Posterior vena cava (tissue), 2 donors: ENCODE measurements at regions of chr5 and their contacts with region 1.

Region 1: DNA sequence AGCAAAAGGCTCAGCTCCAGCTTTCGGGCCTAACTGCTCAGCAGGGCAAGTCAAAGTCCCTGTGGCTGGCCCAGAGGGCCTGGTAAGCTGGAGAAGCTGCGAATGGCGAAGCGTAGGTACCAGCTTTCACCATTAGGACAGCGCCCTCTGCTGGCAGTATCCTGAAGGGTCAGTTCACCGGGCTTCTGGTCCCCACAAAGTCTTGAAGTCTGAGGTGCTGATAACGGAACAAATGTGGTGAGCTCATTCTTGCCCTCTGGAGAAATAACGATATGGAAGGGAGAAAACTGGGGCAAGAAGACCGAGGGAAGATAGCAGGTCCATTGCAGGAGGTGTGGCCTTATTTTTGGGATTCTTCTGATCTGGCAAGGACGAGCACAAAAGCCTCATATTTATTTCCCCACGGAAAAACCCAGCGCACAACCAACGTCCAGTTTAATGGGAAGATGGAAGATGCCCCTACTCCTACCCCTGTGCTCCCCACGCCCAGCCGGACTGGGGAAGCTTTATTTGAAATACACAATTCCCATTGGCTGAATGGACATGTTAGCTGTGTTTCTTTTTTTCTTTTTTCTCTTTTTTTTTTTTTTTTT is 7.2 kb downstream of the SOWAHA start:
- DNase-seq: peak; percentile 97

Region 2: GRCh38 chr5:131242728-131243255 is 1577.5 kb before region 1 on chr5:
- intact Hi-C with region 1: no loop called
- DNase-seq: no peak

Region 3: GRCh38 chr5:132086277-132086794 is 733.9 kb before region 1 on chr5:
- intact Hi-C with region 1: no loop called
- DNase-seq: peak; percentile 89

Region 4: DNA sequence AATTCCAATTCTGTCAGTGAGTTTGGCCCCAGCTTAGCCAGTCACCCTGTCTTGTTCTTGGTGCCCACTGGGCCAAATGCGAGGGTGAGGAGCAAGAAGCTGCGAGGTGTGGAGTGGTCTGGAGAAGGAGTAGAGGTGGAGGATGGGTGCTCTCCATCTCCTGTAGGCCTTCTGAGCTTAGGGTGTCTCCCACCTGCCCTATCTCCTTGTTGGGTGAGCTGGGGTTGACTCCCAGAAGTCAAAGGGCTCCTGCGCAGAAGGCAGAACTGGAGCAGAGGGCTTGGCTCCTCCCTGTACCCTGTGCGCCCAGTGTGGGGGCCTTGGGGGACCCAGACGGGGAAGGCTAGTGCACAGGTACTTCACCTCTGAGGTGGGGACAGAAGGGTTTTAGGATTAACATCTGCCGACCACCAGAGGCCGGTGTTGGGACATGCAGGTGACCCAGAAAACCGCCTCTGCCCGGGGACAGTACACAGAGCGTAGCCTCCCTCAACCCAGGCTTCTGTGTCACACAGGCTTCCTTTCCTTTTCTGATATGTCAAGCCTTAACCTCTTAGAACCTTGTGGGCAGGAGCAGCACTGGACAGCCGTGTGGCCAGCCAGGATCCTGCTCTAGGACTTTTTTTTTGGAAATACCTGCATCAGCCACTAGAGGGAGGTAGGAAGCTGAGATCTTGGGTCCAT is 293.8 kb before region 1 on chr5:
- intact Hi-C with region 1: loop called in 1 of 2 experiments (anchors 10 kb)
- DNase-seq: no peak

Region 5: DNA sequence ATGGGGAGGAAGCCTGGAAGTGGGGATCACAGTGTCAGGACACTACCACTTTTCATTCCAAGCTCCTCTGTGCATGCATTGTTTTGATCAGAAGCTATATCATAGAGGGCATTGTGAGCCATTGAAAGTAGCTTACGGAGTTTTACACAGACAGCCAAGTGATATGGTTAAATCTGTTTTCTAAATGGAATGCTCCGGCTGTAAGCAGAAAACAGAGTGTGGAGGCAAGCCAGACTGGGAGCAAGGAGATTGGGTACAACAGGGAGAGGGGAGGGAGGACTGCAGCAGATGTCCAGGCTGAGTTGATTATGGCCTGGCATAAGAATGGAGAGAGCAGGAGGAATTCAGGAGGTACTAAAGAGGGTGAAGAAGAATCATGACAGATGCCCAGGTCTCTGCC is 22.6 kb before region 1 on chr5:
- intact Hi-C with region 1: no loop called
- DNase-seq: no peak

Region 6: DNA sequence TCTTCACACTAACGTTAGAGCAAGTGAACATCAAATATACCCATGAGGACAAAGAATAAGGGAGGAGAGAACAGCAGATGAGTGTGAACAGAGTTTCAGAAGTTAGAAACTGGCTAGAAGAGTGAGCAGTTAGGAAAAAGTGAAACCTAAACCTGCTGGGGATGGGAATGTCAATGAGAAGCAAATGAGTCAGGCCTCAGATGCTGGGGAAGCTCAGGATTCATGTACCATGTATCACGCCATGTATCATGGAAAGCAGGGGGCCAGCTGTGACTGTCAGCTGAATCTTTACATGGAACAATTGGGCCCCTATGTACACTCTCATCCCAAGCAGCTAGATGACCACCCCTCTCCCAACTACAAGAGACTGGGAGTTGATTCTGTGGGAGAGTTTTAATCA is 29.8 kb after region 1 on chr5:
- intact Hi-C with region 1: no loop called
- DNase-seq: no peak